ENCODE measurements at regions of chr3 and their contacts with region 1.

Region 1: DNA sequence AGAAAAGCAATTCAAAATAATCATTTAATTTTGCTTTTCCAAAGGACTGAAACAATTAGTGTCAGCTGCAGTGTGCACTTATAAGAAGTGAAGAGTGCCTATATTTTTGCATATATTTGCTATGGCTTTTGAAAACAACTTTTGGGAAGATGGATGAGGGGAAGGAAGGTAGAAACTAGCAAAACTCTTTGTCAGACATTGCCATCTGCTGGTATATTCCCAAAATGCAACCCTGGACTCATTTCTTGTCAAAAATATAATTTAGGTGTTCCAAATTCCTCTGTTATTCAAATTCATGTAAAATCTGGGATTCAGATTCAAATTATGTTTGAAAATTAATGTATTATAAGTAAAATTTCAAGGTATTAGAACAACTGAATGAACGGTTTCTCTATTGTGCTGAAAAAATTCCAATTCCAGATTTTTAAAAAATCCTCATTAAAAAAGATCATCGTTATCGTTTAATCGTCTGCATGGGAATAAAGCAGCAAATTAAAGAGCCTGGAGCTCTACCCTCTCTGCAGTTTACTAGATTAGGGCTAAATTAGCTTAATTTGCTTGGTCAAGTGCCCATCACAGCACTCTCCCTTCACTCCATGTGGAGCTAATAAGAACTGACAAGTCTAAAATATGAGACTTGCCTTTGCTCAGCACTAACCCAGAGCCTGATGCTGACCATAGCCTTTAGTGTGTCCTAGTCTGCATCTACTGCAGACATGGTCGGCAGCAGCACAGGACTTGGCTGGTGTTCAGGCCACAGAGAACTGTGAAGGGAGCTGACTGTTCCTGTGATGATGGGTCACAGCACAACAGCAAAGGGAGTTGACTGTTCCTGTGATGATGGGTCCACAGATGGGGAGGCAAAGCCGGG is 67.9 kb upstream of the MITF start:
- DNase-seq: peak; percentile 64
- ATAC-seq: peak; percentile 33; the same call in 1 of the 2 replicates
- H3K4me3 ChIP-seq: no peak overlapping the region
- H3K27ac ChIP-seq: no peak overlapping the region
- H3K4me1 ChIP-seq: peaks cover 5% of the 10 kb centered on the region; the same call in 1 of the 2 replicates
- H3K27me3 ChIP-seq: no peaks in the 10 kb centered on the region
- CTCF ChIP-seq: peak; percentile 64

Region 2: GRCh38 chr3:69161587-69162307 is 509.6 kb before region 1 on chr3:
- CTCF ChIA-PET with region 1: no interaction called
- POLR2A ChIA-PET with region 1: no interaction called
- intact Hi-C with region 1: loop called (anchors 2 kb)
- DNase-seq: peak; percentile 52
- ATAC-seq: peak; percentile 20; the same call in 1 of the 2 replicates
- H3K4me3 ChIP-seq: no peak overlapping the region
- H3K27ac ChIP-seq: no peak overlapping the region
- H3K4me1 ChIP-seq: no peaks in the 10 kb centered on the region
- H3K27me3 ChIP-seq: no peaks in the 10 kb centered on the region
- CTCF ChIP-seq: peak; percentile 80

Region 3: DNA sequence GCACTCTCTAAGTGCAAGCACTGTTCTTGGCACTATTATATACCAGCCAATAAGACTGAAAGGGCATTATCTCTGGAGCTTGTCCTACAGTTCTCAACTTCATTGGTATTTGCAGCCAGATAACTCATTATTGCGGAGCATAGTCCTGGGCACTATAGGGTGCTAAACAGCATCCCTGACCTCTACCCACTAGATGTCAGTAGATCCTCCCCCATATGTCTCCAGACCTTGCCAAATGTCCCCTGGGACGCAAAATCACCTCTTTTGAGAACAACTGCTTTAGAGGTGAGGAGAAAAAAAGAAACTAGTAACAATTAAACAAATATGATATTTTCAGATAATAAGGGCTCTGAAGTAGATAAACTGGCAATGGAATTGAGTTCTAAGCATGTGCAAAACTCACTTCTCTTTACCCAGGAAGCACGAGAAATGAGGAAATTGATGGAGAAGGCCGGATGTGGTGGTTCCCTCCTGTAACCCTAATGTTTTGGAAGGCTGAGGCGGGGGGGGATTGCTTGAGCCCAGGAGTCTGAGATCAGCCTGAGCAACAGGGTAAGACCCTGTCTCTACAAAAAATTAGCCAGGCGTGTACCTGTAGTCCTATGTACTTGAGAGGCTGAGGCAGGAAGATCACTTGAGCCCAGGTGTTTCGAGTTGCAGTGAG is 346.8 kb before region 1 on chr3:
- CTCF ChIA-PET with region 1: no interaction called
- POLR2A ChIA-PET with region 1: no interaction called
- intact Hi-C with region 1: loop called (anchors 5 kb)
- DNase-seq: peak; percentile 7
- ATAC-seq: no peak
- H3K4me3 ChIP-seq: no peak overlapping the region
- H3K27ac ChIP-seq: no peak overlapping the region
- H3K4me1 ChIP-seq: no peaks in the 10 kb centered on the region
- H3K27me3 ChIP-seq: no peaks in the 10 kb centered on the region
- CTCF ChIP-seq: peak; percentile 44

Region 4: DNA sequence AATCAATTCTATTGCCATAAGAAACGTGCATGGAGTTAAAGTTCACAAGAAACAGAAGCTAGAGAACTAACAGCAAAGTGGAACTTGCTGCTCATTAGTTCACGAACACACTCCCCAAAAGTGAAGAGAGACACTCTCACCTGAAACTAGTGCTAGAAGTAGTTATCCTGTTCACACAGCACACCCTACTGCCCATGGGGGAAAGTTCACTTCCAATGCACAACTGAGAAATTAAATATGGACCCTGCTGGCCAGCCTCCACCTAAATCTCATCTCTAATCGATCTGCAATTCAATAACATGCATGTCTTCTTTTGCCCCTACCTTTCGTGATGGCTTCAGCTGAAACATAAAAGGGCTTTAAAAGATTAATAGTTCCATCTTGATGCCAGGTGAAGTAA is 246.1 kb before region 1 on chr3:
- CTCF ChIA-PET with region 1: no interaction called
- POLR2A ChIA-PET with region 1: no interaction called
- intact Hi-C with region 1: loop called (anchors 5 kb)
- DNase-seq: peak; percentile 51
- ATAC-seq: peak; percentile 54
- H3K4me3 ChIP-seq: no peak overlapping the region
- H3K27ac ChIP-seq: no peak overlapping the region
- H3K4me1 ChIP-seq: no peaks in the 10 kb centered on the region
- H3K27me3 ChIP-seq: no peaks in the 10 kb centered on the region
- CTCF ChIP-seq: peak; percentile 63

Region 5: GRCh38 chr3:69439643-69440270 is 231.6 kb before region 1 on chr3:
- CTCF ChIA-PET with region 1: no interaction called
- POLR2A ChIA-PET with region 1: no interaction called
- intact Hi-C with region 1: loop called (anchors 1 kb)
- DNase-seq: peak; percentile 26
- ATAC-seq: no peak
- H3K4me3 ChIP-seq: peak overlapping the region; percentile 37; the same call in 1 of the 2 replicates
- H3K27ac ChIP-seq: no peak overlapping the region
- H3K4me1 ChIP-seq: no peaks in the 10 kb centered on the region
- H3K27me3 ChIP-seq: no peaks in the 10 kb centered on the region
- CTCF ChIP-seq: peak; percentile 65

Region 6: DNA sequence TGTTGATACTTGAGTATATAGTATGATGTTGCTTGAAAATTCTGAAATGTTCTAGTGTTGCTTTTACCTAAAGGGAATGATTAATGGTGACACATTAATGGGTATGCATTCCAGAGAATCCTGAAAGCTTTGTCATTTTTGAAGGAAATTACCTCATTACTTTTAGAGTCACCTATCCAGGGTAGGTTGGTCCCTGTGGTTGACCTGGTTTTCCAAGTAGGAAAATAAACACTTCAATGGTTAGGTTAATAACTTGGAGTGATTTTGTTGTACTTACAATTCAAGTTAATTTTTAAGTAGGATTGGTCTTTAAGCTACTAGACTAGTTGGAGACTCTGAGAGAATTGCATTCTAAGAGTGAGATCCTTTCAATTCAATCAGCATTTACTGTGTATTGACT is 98.9 kb after region 1 on chr3:
- CTCF ChIA-PET with region 1: no interaction called
- POLR2A ChIA-PET with region 1: no interaction called
- intact Hi-C with region 1: no loop called
- DNase-seq: peak; percentile 85
- ATAC-seq: peak; percentile 76
- H3K4me3 ChIP-seq: peak overlapping the region; percentile 48
- H3K27ac ChIP-seq: peak overlapping the region; percentile 87
- H3K4me1 ChIP-seq: peaks cover 55% of the 10 kb centered on the region
- H3K27me3 ChIP-seq: no peaks in the 10 kb centered on the region
- CTCF ChIP-seq: no peak